ENCODE measurements at regions of chr1 and their contacts with region 1.

Region 1: DNA sequence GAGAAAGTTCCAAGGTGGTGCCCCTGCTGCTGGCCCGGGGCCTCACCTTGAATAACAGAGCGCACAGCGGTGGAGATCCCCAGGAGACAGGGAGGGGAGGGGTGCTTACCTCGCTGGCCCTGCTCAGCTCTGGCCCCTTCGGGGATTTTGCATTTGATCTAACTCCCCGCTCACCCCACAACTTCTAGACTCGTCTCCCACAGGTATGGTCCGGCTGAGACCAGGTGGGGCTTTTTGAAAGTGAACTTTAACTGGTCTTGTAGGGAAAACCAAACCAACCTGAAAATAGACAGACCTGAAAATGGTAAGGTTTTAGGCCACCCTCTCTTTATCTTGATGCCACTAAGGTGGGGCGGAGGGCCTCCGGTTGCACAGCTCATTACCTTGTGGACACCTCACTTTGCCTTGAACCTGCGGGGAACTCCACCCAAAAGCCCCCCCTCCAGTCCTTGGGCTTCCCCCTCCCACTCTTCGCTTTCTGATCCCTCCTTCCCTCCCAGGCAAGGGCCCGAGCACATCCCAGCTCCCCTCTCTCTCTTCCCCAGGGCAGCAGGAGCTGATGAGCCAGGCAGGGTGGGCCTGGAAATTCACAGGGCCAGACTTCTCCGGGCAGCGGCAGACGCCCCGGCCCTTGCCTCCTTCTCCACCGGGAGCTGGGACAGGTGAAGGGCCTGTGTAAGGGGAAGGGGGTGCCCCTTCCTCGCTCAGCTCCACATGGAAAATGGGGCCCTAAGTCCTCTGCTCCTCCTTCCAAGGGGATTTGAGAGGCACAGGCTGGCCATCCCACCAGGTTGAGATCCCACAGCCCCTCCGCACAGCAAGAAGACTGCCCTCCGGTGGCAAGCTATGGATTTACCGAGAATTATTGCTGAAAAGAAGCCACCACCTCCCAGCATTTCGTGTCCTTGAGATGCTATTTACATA is 16.1 kb downstream of the TNFRSF8 start:
- DNase-seq: peak; percentile 33
- H3K27ac ChIP-seq: no peak overlapping the region
- CTCF ChIP-seq: peak; percentile 54

Region 2: GRCh38 chr1:12031039-12031980 is 47.9 kb before region 1 on chr1:
- CTCF ChIA-PET with region 1: no interaction called
- POLR2A ChIA-PET with region 1: no interaction called
- DNase-seq: peak; percentile 40
- H3K27ac ChIP-seq: no peak overlapping the region
- CTCF ChIP-seq: peak; percentile 55

Region 3: DNA sequence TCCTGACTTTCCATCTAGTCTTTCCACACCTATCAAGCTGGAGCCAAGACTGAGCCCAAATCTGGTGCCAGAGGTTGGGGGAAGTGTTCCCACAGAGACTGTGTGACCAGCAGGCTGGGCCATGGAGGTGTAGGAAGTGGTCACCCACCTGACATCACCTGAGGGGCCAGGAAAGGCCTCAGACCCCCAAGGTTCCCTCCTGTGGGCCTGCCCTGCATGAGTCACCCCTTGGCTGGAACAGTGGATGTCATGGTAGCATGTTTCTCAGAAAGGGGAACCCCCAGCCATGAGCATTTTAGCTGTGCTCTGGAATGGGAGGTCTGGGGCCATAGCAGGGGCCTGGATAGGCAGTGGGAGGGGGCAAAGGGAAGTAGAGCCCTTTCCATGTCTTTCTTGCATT is 21.8 kb before region 1 on chr1:
- CTCF ChIA-PET with region 1: no interaction called
- POLR2A ChIA-PET with region 1: no interaction called
- DNase-seq: no peak
- H3K27ac ChIP-seq: no peak overlapping the region
- CTCF ChIP-seq: no peak

Region 4: DNA sequence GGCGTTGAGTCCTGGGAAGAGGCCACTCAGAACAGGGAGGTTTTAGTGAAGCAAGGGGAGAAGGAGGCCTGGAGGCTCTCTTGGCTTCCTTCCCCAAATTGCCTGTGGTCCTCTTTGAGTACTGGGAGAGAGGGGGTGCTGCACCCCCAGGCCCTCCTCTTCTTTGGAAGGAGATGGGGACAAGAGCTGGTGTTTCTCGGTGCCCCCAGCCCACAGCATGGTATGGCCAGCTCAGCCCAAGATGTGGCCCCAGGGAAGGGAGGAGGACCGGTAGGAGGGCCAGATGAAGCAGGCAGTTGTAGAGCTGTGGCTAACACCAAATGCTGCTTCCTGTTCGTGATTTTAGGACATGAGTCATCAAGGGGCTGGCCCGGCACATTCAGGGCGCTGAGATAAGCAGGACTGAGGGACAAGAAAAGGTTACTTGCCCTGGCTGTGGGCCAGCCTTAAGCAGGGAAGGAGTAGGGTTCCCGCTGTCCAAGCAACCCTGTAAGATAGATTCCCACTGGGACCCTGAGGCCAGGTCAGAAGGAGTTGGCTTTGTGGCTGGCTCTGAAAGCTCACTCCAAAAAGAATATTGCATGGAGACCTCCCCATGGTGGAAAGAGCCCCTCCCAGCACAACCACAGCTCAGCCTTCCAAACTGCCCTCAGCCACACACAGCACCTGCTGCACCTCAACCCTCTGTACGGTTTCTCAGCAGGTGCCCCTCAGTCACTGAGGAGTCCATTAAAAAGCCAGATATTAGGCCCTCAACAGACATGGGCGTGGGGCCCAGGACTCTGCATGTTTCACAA is 82.7 kb after region 1 on chr1:
- CTCF ChIA-PET with region 1: no interaction called
- POLR2A ChIA-PET with region 1: no interaction called
- DNase-seq: peak; percentile 82
- H3K27ac ChIP-seq: peak overlapping the region; percentile 72
- CTCF ChIP-seq: no peak

Region 5: DNA sequence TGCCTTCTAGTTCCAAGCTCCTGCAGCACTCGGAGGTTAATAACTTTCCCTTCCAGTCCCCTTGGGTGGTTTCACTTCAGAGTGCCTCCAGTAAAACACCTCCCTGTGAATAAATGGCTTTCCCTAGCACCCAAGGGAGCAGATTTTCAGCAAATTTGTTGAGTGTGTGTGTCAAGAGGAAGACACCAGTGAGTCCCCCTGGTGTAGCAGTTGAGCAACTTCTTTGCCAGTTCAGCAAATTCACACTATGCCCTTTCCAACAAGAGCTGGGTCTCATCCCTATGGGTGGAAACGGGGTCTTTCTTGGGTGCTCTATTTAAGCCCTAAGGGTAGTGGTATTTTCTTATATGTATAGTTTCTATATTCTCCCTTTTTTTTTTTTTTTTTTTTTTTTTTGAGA is 563.9 kb after region 1 on chr1:
- CTCF ChIA-PET with region 1: no interaction called
- POLR2A ChIA-PET with region 1: interaction called, 17 read pairs
- DNase-seq: no peak
- H3K27ac ChIP-seq: no peak overlapping the region
- CTCF ChIP-seq: no peak

Measured in RWPE1 (cell line).